Heart left ventricle (tissue), 16 donors: ENCODE measurements at regions of chr14 and their contacts with region 1.

Region 1: GRCh38 chr14:103014466-103015319 is 42.7 kb downstream of the CDC42BPB start:
- DNase-seq: peak in 1 of 5 donors; percentile 46
- ATAC-seq: no peak
- H3K4me3 ChIP-seq: no peak overlapping the region
- H3K27ac ChIP-seq: peak overlapping the region in 3 of 12 donors; percentile 21 to 59 (median 32)
- H3K4me1 ChIP-seq: peaks cover 0 to 63% (median 26%) of the 10 kb centered on the region in 12 donors
- H3K27me3 ChIP-seq: no peaks in the 10 kb centered on the region
- CTCF ChIP-seq: no peak
- POLR2A ChIP-seq: no peak

Region 2: GRCh38 chr14:103052407-103052806 is 37.7 kb after region 1 on chr14:
- intact Hi-C with region 1: loop called in 2 of 10 experiments (anchors 5 to 10 kb)
- DNase-seq: no peak
- ATAC-seq: no peak
- H3K4me3 ChIP-seq: no peak overlapping the region
- H3K27ac ChIP-seq: no peak overlapping the region
- H3K4me1 ChIP-seq: peaks cover 0 to 67% (median 39%) of the 10 kb centered on the region in 12 donors
- H3K27me3 ChIP-seq: no peaks in the 10 kb centered on the region
- CTCF ChIP-seq: no peak
- POLR2A ChIP-seq: no peak

Region 3: DNA sequence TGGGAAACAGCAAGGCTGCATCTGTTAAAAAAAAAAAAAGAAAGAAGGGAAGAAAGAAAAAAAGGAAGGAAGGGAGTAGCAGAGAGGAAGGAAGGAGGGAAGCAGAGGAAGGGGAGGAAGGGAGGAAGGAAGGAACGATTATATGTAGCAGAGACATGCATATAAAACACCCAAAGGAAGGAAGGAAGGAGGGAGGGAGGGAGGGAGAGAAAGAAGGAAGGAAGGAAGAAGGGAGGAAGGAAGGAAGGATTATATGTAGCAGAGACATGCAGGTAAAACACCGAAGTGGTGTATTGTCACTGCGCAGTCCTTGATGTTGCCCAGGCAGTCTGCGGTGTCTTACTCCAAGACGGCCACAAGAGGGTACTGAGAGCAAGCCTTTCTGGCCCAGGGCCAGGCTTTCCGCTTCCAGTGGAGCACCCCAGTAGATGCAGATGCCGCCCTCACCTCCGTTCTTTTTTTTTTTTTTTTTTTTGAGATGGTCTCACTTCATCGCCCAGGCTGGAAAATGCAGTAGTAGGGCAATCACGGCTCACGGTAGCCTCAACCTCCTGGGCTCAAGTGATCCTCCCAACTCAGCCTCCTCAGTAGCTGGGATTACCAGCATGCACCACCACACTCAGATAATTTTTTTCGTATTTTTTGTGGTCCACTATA is 63.5 kb after region 1 on chr14:
- intact Hi-C with region 1: no loop called
- DNase-seq: peak; percentile 76 to 89 (median 77)
- ATAC-seq: peak in 3 of 4 donors; percentile 30 to 34 (median 33)
- H3K4me3 ChIP-seq: no peak overlapping the region
- H3K27ac ChIP-seq: no peak overlapping the region
- H3K4me1 ChIP-seq: peaks cover 3 to 27% (median 20%) of the 10 kb centered on the region in 12 donors
- H3K27me3 ChIP-seq: peaks cover 0 to 9% (median 0%) of the 10 kb centered on the region in 9 donors
- CTCF ChIP-seq: peak; percentile 52 to 75 (median 67)
- POLR2A ChIP-seq: no peak